ENCODE measurements at regions of chr5 and their contacts with region 1.

Region 1: DNA sequence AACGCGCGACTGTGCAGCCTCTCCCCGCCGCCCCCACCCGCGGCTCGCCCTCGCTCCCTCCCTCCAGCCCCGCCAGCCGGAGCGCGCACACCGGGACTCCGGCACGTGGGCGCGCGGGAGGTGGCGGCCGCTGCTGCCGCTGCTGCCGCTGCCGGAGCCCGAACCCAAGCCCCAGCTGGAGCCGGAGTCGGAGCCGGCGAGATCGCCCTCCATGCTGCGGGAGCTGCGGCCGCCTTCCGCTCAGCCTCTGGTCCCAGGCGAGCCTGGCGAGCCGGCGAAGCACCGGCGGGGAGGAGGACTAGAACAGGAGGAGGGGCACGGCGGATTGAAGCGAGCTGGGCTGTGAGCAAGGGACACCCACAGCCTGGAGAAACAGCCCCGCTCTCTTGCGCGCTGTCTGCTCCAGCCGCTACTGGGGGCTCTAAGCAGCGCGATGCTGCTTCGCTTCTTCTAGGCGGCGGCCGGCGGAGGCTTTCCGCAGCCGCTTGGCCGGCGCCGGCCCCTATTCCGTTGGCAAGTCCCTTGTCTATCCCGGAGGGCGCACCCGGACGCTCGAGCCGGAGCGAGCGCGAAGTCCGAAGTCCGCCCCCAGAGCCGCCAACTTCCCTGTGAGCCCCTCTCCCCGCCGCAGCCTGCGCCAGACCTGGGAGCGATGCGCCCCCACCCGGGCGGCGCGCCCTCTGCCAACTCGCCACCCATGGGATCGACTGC is 598.7 kb upstream of the SGCD start:
- DNase-seq: peak; percentile 79

Region 2: DNA sequence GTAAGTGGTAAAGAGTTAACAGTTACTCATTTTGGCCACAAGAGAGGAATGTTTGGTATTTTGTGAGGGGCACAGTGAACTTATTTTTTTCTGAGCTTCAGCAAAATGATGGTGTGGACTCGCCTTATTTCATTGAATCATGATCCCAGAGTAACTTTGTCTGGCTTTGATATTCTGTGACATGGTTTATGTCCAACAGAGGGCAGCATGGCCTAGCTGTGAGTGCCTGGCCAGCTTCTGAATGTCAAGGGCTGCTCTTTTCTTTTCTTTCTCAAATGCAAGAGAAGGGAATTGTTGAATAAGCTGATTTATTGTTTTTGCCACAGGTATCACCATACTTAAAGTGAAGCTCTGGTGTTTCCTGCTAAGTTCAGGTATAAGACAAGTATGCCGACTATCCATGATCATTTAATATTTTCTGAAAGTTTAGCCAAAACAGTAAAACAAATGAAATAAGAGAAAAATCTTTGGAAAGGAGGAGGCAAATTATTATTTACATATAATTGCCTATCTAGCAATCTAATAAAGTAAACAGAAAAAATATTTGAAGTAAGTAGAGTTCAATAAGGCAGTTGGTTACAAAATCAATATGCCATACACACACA is 755.7 kb before region 1 on chr5:
- intact Hi-C with region 1: loop called (anchors 5 kb)
- DNase-seq: no peak

Region 3: DNA sequence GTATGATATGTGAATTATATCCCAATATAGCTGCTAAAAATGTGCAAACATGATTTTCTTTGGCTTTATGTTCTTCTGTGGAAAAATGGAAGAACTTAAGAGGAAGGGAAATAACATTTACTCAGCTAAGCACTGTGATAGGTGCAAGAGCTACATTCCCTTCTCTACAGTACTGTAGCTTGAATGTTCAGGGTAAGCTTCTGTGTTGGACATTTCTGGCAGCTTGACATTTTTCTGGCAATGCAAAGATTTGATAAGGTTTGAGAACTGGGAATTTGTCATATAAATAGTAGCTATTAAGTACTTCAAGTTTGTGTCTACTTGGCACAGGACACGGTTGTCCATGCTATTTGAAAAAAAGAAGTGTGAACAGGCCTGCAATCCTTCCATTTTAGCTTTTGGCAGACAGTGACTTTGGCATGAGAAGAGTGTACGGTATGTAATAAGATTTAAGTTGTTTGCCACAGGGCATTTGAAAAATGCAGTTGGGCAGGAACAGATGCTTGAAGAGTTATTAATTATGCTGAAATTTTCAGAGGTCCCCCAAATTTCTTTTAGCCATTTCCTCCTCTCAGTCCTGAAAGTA is 637.1 kb before region 1 on chr5:
- intact Hi-C with region 1: loop called (anchors 10 kb)
- DNase-seq: no peak

Region 4: DNA sequence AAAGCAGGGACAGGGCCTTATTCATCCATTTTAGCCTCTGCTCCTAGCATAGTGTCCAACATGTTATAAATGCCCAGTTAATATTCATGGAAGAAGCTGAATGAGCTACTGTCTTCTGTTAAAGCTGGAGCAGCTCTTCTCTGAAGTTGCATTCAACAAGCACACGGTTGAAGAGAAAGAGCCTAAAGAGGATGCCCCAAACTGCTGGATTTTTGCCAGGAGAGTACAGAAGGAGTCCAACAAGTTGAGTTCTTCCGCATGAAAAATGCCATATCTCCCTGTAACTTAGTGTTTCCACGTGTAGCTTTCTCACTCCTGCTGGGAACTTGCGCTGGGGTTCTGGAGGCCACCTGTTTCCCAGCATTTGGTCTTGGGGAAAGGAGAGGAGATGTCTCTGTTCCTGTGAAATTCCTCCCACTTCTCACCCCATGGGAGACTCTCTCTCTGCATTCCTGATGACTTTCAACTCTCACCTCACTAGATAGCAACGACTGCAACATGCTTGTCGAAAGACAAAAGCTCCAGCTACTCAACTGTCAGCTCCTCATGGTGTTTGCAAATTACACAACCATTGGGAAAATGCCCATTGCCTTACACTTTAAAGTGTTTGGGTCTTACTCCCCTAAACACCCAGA is 592.0 kb before region 1 on chr5:
- intact Hi-C with region 1: loop called (anchors 5 kb)
- DNase-seq: no peak

Region 5: GRCh38 chr5:155485386-155485785 is 242.9 kb before region 1 on chr5:
- intact Hi-C with region 1: loop called (anchors 5 kb)
- DNase-seq: no peak

Region 6: DNA sequence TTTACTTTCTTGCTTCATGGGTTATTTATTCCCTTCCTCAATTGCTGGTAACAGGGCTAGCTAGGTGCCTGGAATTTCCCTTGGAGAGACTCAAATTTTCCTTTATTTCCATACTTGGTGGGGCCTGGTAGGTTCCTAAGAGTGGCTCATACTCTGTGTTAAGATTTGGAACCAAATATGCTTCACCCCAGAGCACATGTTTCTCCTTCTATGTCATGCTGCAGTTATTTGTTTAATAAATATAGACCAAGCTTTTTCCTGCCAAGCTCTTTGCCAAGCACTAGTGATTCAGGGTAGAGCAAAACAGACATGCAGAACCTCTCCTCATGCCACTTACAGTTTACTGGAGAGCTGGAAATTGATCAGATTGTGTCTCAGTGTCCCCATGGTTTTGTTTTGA is 308.3 kb after region 1 on chr5:
- intact Hi-C with region 1: loop called (anchors 10 kb)
- DNase-seq: no peak